ENCODE measurements at regions of chr3 and their contacts with region 1.

Region 1: GRCh38 chr3:100068826-100069225 is 45.5 kb downstream of the FILIP1L start:
- DNase-seq: peak; percentile 63 to 75 (median 66)
- H3K4me3 ChIP-seq: no peak overlapping the region
- H3K4me3 Mint-ChIP-seq: peak overlapping the region in 1 of 8 donors; percentile 45
- H3K27ac ChIP-seq: no peak overlapping the region
- H3K27ac Mint-ChIP-seq: peak overlapping the region in 2 of 7 donors; percentile 1 to 71
- H3K4me1 ChIP-seq: peaks cover 20% of the 10 kb centered on the region
- H3K4me1 Mint-ChIP-seq: peaks cover 24 to 31% (median 28%) of the 10 kb centered on the region in 4 donors
- H3K27me3 ChIP-seq: no peaks in the 10 kb centered on the region
- H3K27me3 Mint-ChIP-seq: no peaks in the 10 kb centered on the region

Region 2: GRCh38 chr3:100254168-100254777 is 185.4 kb after region 1 on chr3:
- CTCF ChIA-PET with region 1: interaction called, 106 read pairs
- POLR2A ChIA-PET with region 1: no interaction called
- intact Hi-C with region 1: loop called (anchors 1 kb)
- DNase-seq: peak in 4 of 5 donors; percentile 21 to 32 (median 27)
- H3K4me3 ChIP-seq: no peak overlapping the region
- H3K4me3 Mint-ChIP-seq: no peak overlapping the region
- H3K27ac ChIP-seq: no peak overlapping the region
- H3K27ac Mint-ChIP-seq: no peak overlapping the region
- H3K4me1 ChIP-seq: no peaks in the 10 kb centered on the region
- H3K4me1 Mint-ChIP-seq: peaks cover 2 to 9% (median 6%) of the 10 kb centered on the region in 4 donors
- H3K27me3 ChIP-seq: no peaks in the 10 kb centered on the region
- H3K27me3 Mint-ChIP-seq: no peaks in the 10 kb centered on the region